Activated CD4-positive, alpha-beta memory T cell treated with anti-CD3 and anti-CD28 coated beads, Interleukin-2, amount 10 ng/mL, durations not matched to agents 7 days and 5 days (primary cell): ENCODE measurements at regions of chr16 and their contacts with region 1.

Region 1: GRCh38 chr16:11396241-11397048 is 51.2 kb downstream of the RMI2 start:
- DNase-seq: peak; percentile 66
- H3K4me3 Mint-ChIP-seq: no peak overlapping the region
- H3K27ac Mint-ChIP-seq: no peak overlapping the region
- H3K4me1 Mint-ChIP-seq: no peaks in the 10 kb centered on the region
- H3K27me3 Mint-ChIP-seq: peaks cover 1% of the 10 kb centered on the region

Region 2: DNA sequence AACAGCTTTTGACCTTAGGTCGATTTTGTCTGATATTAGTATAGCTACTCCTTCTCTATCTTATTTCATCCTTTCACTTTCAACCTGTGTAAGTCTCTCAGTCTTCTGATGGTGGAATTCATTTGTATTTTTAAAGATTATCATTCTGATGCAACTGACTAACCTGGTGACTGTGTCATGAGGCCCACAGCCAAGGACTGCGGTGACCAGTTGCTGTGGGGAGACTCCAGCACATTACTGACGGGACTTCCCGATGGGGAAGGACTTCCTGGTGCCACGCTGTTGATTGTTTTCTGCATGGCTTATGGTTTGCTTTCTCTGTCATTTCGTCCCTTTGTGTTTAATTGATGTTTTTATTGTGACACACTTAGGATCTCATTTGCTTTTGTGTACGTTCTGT is 17.0 kb before region 1 on chr16:
- CTCF ChIA-PET with region 1: interaction called, 10 read pairs
- POLR2A ChIA-PET with region 1: no interaction called
- DNase-seq: peak; percentile 57
- H3K4me3 Mint-ChIP-seq: peak overlapping the region; percentile 58
- H3K27ac Mint-ChIP-seq: peak overlapping the region; percentile 70
- H3K4me1 Mint-ChIP-seq: peaks cover 21% of the 10 kb centered on the region
- H3K27me3 Mint-ChIP-seq: no peaks in the 10 kb centered on the region

Region 3: GRCh38 chr16:11407047-11407982 is 10.9 kb after region 1 on chr16:
- CTCF ChIA-PET with region 1: interaction called, 39 read pairs
- POLR2A ChIA-PET with region 1: interaction called, 5 read pairs
- DNase-seq: peak; percentile 73
- H3K4me3 Mint-ChIP-seq: no peak overlapping the region
- H3K27ac Mint-ChIP-seq: no peak overlapping the region
- H3K4me1 Mint-ChIP-seq: peaks cover 2% of the 10 kb centered on the region
- H3K27me3 Mint-ChIP-seq: no peaks in the 10 kb centered on the region

Region 4: GRCh38 chr16:11470676-11471415 is 74.4 kb after region 1 on chr16:
- CTCF ChIA-PET with region 1: no interaction called
- POLR2A ChIA-PET with region 1: no interaction called
- DNase-seq: no peak
- H3K4me3 Mint-ChIP-seq: no peak overlapping the region
- H3K27ac Mint-ChIP-seq: no peak overlapping the region
- H3K4me1 Mint-ChIP-seq: no peaks in the 10 kb centered on the region
- H3K27me3 Mint-ChIP-seq: no peaks in the 10 kb centered on the region